ENCODE measurements at regions of chr3 and their contacts with region 1.

Region 1: GRCh38 chr3:119702530-119703157 is at the start of gene CFAP91:
- DNase-seq: peak; percentile 83
- ATAC-seq: peak; percentile 100
- H3K4me3 ChIP-seq: peak within 1 kb of the TSS; percentile 42
- H3K27ac ChIP-seq: no peak within 1 kb of the TSS
- H3K4me1 ChIP-seq: 0 out of 2 replicates have a peak, but pooled peaks cover 2% of the 10 kb centered on the region
- H3K27me3 ChIP-seq: peaks cover 18% of the 10 kb centered on the region
- CTCF ChIP-seq: no peak
- POLR2A ChIP-seq: no peak
- RAD21 ChIP-seq: no peak
- total RNA-seq, gene CFAP91: not detected in 2 replicates

Region 2: DNA sequence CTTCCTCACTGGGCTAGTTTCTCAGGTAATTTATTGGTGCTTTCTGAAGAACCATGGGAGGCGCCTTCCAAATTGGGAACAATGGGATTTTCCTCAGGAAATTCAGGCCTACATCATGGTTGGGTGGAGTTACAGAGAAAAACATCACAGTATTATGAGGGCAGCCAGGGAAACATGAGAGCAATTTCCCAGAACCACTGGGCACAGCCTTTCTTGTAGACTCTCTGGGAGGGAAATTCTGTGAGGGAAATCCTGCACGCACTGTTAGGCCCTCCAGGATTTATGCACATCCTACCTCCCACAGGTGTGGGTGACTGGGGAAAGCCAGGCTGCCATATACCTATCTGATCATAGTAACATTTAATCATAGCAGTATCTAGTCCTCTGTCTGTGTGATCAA is 55.5 kb before region 1 on chr3:
- CTCF ChIA-PET with region 1: no interaction called
- POLR2A ChIA-PET with region 1: interaction called, 10 read pairs
- dilution Hi-C with region 1: no loop called
- in situ Hi-C with region 1: no loop called
- intact Hi-C with region 1: no loop called
- DNase-seq: no peak
- ATAC-seq: no peak
- H3K4me3 ChIP-seq: no peak overlapping the region
- H3K27ac ChIP-seq: no peak overlapping the region
- H3K4me1 ChIP-seq: peaks cover 10% of the 10 kb centered on the region
- H3K27me3 ChIP-seq: no peaks in the 10 kb centered on the region
- CTCF ChIP-seq: no peak
- POLR2A ChIP-seq: no peak
- RAD21 ChIP-seq: no peak

Region 3: GRCh38 chr3:120198305-120198878 is 495.7 kb after region 1 on chr3:
- CTCF ChIA-PET with region 1: no interaction called
- POLR2A ChIA-PET with region 1: no interaction called
- dilution Hi-C with region 1: no loop called
- in situ Hi-C with region 1: no loop called
- intact Hi-C with region 1: loop called (anchors 10 kb)
- DNase-seq: peak; percentile 41
- ATAC-seq: peak; percentile 66
- H3K4me3 ChIP-seq: no peak overlapping the region
- H3K27ac ChIP-seq: no peak overlapping the region
- H3K4me1 ChIP-seq: peaks cover 2% of the 10 kb centered on the region; the same call in 1 of the 2 replicates
- H3K27me3 ChIP-seq: no peaks in the 10 kb centered on the region
- CTCF ChIP-seq: peak; percentile 45
- POLR2A ChIP-seq: no peak
- RAD21 ChIP-seq: peak; percentile 60